Activated CD4-positive, alpha-beta T cell treated with anti-CD3 and anti-CD28 coated beads, Interleukin-2, amount 10 ng/mL, durations not matched to agents 7 days and 5 days (primary cell): ENCODE measurements at regions of chr11 and their contacts with region 1.

Region 1: GRCh38 chr11:45233121-45233803 is 52.9 kb downstream of the SYT13 start:
- DNase-seq: peak; percentile 63
- H3K4me3 Mint-ChIP-seq: no peak overlapping the region
- H3K27ac Mint-ChIP-seq: no peak overlapping the region
- H3K4me1 Mint-ChIP-seq: no peaks in the 10 kb centered on the region
- H3K27me3 Mint-ChIP-seq: peaks cover 5% of the 10 kb centered on the region

Region 2: DNA sequence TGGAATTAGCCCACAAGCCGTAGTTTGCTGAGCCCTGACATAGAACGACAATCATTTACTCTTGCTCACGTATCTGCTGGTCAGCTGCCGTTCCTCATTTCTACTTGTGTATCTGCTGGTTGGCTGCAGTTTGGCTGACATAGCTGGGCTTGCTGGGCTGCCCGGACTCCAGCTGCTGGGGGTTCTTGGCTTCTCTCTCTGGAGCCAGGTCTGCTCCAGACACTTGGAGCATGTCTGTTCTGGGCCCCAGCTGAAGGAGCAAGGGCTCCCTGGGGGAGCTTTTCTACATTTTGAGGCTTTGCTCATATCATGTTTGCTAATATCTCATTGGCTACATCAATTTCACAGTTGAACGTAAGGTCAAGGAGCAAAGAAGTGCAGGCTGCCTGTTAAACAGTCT is 39.6 kb before region 1 on chr11:
- CTCF ChIA-PET with region 1: no interaction called
- POLR2A ChIA-PET with region 1: interaction called, 12 read pairs
- DNase-seq: no peak
- H3K4me3 Mint-ChIP-seq: no peak overlapping the region
- H3K27ac Mint-ChIP-seq: no peak overlapping the region
- H3K4me1 Mint-ChIP-seq: no peaks in the 10 kb centered on the region
- H3K27me3 Mint-ChIP-seq: no peaks in the 10 kb centered on the region